ENCODE measurements at regions of chr5 and their contacts with region 1.

Region 1: DNA sequence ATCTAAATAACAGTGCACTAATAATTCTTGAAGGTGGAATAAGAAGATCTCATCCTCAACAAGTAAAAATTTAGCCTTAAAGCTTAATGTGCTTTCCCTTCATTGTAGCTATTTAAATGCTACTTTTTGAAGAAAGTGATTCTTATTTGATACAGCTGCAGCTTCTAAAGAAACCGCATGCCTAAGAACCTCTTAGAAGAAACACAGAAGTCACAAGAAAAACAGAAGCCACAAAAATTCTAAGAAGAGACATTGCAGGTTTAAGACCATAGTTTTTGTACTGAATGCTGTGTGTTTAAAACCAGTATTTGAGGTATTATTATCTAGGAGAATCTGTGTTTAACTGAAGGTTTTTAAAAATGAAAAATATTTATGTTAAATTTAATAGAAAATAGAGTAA is 68.3 kb downstream of the PPIP5K2 start:
- DNase-seq: no peak
- ATAC-seq: no peak
- H3K4me3 Mint-ChIP-seq: no peak overlapping the region
- H3K27ac Mint-ChIP-seq: no peak overlapping the region
- H3K4me1 Mint-ChIP-seq: no peaks in the 10 kb centered on the region
- H3K27me3 Mint-ChIP-seq: no peaks in the 10 kb centered on the region
- CTCF ChIP-seq: no peak

Region 2: GRCh38 chr5:103151156-103151555 is 37.3 kb before region 1 on chr5:
- CTCF ChIA-PET with region 1: no interaction called
- POLR2A ChIA-PET with region 1: no interaction called
- intact Hi-C with region 1: loop called (anchors 5 kb)
- DNase-seq: no peak
- ATAC-seq: no peak
- H3K4me3 Mint-ChIP-seq: no peak overlapping the region
- H3K27ac Mint-ChIP-seq: no peak overlapping the region
- H3K4me1 Mint-ChIP-seq: no peaks in the 10 kb centered on the region
- H3K27me3 Mint-ChIP-seq: no peaks in the 10 kb centered on the region
- CTCF ChIP-seq: no peak

Region 3: GRCh38 chr5:103203226-103203625 is 14.8 kb after region 1 on chr5:
- CTCF ChIA-PET with region 1: no interaction called
- POLR2A ChIA-PET with region 1: no interaction called
- intact Hi-C with region 1: no loop called
- DNase-seq: no peak
- ATAC-seq: no peak
- H3K4me3 Mint-ChIP-seq: no peak overlapping the region
- H3K27ac Mint-ChIP-seq: no peak overlapping the region
- H3K4me1 Mint-ChIP-seq: peaks cover 10% of the 10 kb centered on the region
- H3K27me3 Mint-ChIP-seq: no peaks in the 10 kb centered on the region
- CTCF ChIP-seq: no peak

Measured in activated B cell treated with CpG ODN at 0.5 μM for 24 hours (primary cell).